GM23248 (cell line): ENCODE measurements at regions of chr6 and their contacts with region 1.

Region 1: GRCh38 chr6:130322673-130323268 is 43.0 kb upstream of the TMEM200A start:
- DNase-seq: peak; percentile 76
- H3K4me3 ChIP-seq: no peak overlapping the region
- H3K27ac ChIP-seq: no peak overlapping the region
- H3K4me1 ChIP-seq: peaks cover 31% of the 10 kb centered on the region
- H3K27me3 ChIP-seq: no peaks in the 10 kb centered on the region

Region 2: GRCh38 chr6:130643361-130643760 is 320.6 kb after region 1 on chr6:
- in situ Hi-C with region 1: no loop called
- DNase-seq: no peak
- H3K4me3 ChIP-seq: no peak overlapping the region
- H3K27ac ChIP-seq: no peak overlapping the region
- H3K4me1 ChIP-seq: peaks cover 13% of the 10 kb centered on the region
- H3K27me3 ChIP-seq: no peaks in the 10 kb centered on the region

Region 3: DNA sequence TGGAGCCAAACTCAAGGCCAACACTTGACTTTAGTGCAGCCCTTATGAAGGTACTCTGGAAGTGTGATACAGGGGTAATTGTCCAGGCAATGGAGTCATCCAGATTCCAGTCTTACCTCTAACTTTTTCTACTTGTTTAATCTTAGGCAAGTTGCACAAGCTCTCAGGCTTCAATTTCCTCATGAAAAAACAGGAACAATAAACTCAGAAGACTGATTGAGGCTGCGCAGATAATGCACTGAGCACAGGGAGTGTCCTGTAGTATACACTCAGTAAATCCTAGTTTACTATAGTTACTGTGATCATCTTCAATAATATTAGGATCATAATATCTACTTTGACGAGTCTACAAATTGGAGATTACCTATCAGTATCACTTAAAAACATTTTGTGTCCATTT is 377.0 kb after region 1 on chr6:
- in situ Hi-C with region 1: loop called (anchors 5 kb)
- DNase-seq: no peak
- H3K4me3 ChIP-seq: no peak overlapping the region
- H3K27ac ChIP-seq: no peak overlapping the region
- H3K4me1 ChIP-seq: peaks cover 23% of the 10 kb centered on the region
- H3K27me3 ChIP-seq: no peaks in the 10 kb centered on the region

Region 4: DNA sequence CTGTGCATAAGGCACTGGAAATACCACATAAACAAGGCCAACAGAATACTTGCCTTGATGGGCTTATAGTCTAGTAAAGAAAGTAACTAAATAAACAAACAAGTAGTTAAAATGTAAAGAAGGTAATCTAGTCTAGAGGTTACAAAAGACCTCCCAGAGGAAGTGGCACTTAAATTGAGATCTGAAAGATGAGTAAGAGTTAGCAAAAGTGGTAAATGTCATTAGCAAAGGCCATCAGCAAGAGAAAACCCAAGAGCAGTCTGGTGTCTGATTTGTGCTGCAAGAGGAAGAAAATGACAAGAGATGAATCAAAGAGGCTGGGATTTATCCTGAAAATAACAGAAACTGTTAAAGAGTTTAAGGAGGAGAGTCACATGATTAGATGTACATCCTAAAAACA is 407.8 kb after region 1 on chr6:
- in situ Hi-C with region 1: no loop called
- DNase-seq: no peak
- H3K4me3 ChIP-seq: no peak overlapping the region
- H3K27ac ChIP-seq: no peak overlapping the region
- H3K4me1 ChIP-seq: no peaks in the 10 kb centered on the region
- H3K27me3 ChIP-seq: no peaks in the 10 kb centered on the region

Region 5: GRCh38 chr6:130843575-130844320 is 521.0 kb after region 1 on chr6:
- in situ Hi-C with region 1: loop called (anchors 25 kb)
- DNase-seq: peak; percentile 55
- H3K4me3 ChIP-seq: no peak overlapping the region
- H3K27ac ChIP-seq: no peak overlapping the region
- H3K4me1 ChIP-seq: peaks cover 9% of the 10 kb centered on the region
- H3K27me3 ChIP-seq: no peaks in the 10 kb centered on the region